Common myeloid progenitor, CD34-positive (primary cell): ENCODE measurements at regions of chr13 and their contacts with region 1.

Region 1: DNA sequence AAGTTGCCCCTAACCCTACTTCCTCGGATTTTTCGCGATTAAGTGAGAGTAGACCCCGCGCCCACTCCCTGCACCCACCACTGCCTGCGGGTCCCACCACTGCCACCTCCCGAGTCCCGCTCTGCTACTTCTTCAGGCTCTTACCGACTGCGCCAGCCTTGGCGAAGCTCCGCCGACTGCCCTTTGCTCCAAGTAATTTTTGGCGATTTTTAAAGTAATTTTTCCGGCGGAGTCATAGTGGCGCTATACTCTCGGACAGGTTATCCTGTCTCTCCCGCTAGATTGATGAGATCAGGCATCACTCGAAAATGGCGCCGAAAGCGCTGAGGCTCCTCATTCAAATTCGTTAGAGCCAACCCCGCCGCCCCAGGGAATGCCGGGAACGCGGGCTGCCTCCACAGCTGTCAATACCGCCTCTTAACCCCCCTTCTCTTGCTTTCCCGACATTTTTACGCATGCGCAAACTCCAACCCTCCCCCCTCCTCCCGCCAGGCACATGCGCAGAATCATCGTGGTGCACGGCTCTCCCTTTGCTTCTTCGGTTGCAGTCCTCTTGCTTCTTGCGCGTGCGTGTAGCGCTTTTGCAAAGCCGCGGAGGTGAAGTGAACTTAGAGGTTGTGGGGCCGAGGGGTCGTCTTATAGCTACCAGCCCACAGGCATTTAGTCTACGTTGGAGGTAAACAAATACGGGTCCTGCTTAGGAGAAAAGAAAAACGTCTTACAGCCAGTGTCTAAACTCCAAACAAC is 66.6 kb downstream of the KCNRG start:
- DNase-seq: peak; percentile 99
- H3K4me3 ChIP-seq: peak overlapping the region; percentile 74 to 99 (median 96)
- H3K27ac ChIP-seq: peak overlapping the region; percentile 85 to 92
- H3K4me1 ChIP-seq: peaks cover 15 to 49% (median 31%) of the 10 kb centered on the region in 4 experiments
- H3K27me3 ChIP-seq: no peaks in the 10 kb centered on the region

Region 2: DNA sequence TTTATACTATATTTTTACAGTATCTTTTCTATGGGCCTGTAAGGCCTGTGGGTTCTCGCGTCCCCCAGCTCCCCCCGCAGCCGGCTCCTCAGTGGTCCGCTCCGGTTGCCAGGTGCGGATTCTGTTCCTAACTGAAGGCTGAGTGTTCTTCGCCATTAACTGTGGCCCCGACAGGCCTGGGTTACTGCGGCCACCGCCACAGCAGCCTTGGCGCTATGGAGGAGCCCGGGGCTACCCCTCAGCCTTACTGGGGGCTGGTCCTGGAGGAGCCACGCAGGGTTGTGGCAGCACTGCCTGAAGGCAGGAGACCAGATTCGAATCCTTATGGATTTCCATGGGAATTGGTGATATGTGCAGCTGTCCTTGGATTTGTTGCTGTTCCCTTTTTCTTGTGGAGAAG is 191.5 kb before region 1 on chr13:
- CTCF ChIA-PET with region 1: no interaction called
- POLR2A ChIA-PET with region 1: no interaction called
- DNase-seq: no peak
- H3K4me3 ChIP-seq: no peak overlapping the region
- H3K27ac ChIP-seq: no peak overlapping the region
- H3K4me1 ChIP-seq: no peaks in the 10 kb centered on the region
- H3K27me3 ChIP-seq: no peaks in the 10 kb centered on the region

Region 3: GRCh38 chr13:49996951-49997895 is 84.6 kb before region 1 on chr13 and contains the start of gene TRIM13:
- CTCF ChIA-PET with region 1: interaction called, 13 read pairs
- POLR2A ChIA-PET with region 1: interaction called, 27 read pairs
- DNase-seq: peak; percentile 91 to 95 (median 94)
- H3K4me3 ChIP-seq: peak within 1 kb of the TSS; percentile 77 to 97 (median 94)
- H3K27ac ChIP-seq: peak within 1 kb of the TSS; percentile 96 to 97
- H3K4me1 ChIP-seq: peaks cover 13 to 47% (median 37%) of the 10 kb centered on the region in 4 experiments
- H3K27me3 ChIP-seq: no peaks in the 10 kb centered on the region

Region 4: DNA sequence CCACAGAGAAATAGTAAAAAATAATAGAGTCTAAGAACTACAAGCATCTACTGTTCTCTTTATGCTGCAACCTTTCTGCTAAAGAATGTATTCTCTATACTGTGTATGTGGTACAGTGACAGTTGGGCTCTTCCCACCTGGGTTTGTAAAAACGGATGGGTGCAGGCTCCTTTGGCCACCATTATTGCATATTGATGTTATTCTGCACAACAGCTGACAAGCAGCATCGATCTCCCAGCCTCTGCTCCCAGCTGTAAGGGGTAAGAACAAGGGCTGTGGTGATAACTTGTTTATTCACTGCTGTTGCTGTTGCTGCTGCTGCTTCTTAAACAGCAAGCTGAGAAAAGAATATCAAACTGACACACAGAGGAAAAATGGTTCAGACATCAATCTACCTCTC is 10.5 kb before region 1 on chr13:
- CTCF ChIA-PET with region 1: interaction called, 10 read pairs
- POLR2A ChIA-PET with region 1: interaction called, 3 read pairs
- DNase-seq: peak in 1 of 3 donors; percentile 26
- H3K4me3 ChIP-seq: peak overlapping the region in 3 of 7 experiments; percentile 26 to 58 (median 33)
- H3K27ac ChIP-seq: peak overlapping the region in 1 of 2 experiments; percentile 70
- H3K4me1 ChIP-seq: peaks cover 2 to 48% (median 20%) of the 10 kb centered on the region in 4 experiments
- H3K27me3 ChIP-seq: no peaks in the 10 kb centered on the region

Region 5: GRCh38 chr13:50531917-50532899 is 450.4 kb after region 1 on chr13:
- CTCF ChIA-PET with region 1: interaction called, 10 read pairs
- POLR2A ChIA-PET with region 1: interaction called, 4 read pairs
- DNase-seq: peak in 2 of 3 donors; percentile 14 to 28
- H3K4me3 ChIP-seq: no peak overlapping the region
- H3K27ac ChIP-seq: no peak overlapping the region
- H3K4me1 ChIP-seq: peaks cover 10 to 23% (median 14%) of the 10 kb centered on the region in 4 experiments
- H3K27me3 ChIP-seq: no peaks in the 10 kb centered on the region